Activated CD8-positive, alpha-beta T cell treated with anti-CD3 and anti-CD28 coated beads for 36 hours (primary cell): ENCODE measurements at regions of chr7 and their contacts with region 1.

Region 1: DNA sequence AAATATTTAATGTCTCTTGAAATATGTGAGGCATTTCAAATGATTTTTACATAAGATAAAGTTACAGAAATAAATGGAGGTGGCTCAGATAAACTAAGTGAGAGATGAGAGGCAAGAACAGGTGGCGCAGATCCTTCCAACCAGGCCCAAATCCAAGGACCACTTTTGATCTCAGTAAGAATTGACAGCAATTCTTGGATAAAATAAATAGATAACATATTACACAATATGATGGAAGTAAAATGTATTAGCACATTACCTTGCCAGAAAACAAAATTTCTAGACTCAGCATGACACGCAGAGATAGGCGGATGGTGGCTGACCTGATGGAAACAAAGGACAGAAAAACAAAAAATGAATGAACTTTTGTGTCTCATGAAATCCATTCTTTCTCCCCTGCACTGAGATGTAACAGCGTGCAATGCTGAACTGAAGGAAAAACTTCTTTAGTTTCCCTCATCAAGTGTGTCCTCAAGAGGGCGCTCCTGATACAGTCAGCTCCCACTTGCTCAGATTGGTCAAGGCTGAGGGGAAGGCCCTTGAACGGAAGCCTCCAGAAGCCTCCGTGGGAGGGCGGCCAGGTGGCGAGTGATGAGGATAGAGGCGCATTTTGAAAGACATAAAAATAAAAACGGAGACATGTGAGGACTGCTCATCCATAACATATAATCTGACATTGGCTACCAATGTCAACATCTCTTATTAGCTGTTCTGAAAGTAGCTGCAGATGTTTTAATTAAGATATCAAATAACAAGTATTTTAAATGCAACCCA is 62.8 kb upstream of the GSDME start:
- DNase-seq: peak; percentile 91
- ATAC-seq: peak; percentile 49
- H3K4me3 Mint-ChIP-seq: peak overlapping the region; percentile 50
- H3K27ac Mint-ChIP-seq: peak overlapping the region; percentile 97
- H3K4me1 Mint-ChIP-seq: peaks cover 36% of the 10 kb centered on the region
- H3K27me3 Mint-ChIP-seq: no peaks in the 10 kb centered on the region
- CTCF ChIP-seq: peak; percentile 90

Region 2: GRCh38 chr7:24510759-24511158 is 309.3 kb before region 1 on chr7:
- CTCF ChIA-PET with region 1: no interaction called
- POLR2A ChIA-PET with region 1: no interaction called
- intact Hi-C with region 1: no loop called
- DNase-seq: no peak
- ATAC-seq: no peak
- H3K4me3 Mint-ChIP-seq: no peak overlapping the region
- H3K27ac Mint-ChIP-seq: no peak overlapping the region
- H3K4me1 Mint-ChIP-seq: no peaks in the 10 kb centered on the region
- H3K27me3 Mint-ChIP-seq: peaks cover 2% of the 10 kb centered on the region
- CTCF ChIP-seq: no peak

Region 3: DNA sequence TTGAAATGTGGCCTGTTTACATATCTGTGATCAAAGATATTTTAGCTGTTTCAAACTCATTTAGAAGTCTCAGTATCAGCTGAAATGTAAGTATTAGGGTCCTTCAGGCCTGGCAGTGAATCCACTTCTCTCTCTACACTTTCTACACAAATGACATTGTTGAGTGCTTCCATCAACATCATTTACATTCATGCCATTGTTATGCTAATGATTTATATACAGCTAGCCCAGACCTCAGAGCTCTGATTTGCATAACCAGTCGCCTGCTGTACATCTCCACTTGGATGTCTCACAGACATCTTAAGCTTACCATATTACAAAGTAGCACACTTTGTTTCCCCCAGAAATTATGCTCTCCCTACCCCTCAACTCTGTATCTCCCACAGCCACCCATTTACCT is 134.4 kb before region 1 on chr7:
- CTCF ChIA-PET with region 1: no interaction called
- POLR2A ChIA-PET with region 1: no interaction called
- intact Hi-C with region 1: no loop called
- DNase-seq: no peak
- ATAC-seq: no peak
- H3K4me3 Mint-ChIP-seq: no peak overlapping the region
- H3K27ac Mint-ChIP-seq: no peak overlapping the region
- H3K4me1 Mint-ChIP-seq: no peaks in the 10 kb centered on the region
- H3K27me3 Mint-ChIP-seq: no peaks in the 10 kb centered on the region
- CTCF ChIP-seq: no peak

Region 4: DNA sequence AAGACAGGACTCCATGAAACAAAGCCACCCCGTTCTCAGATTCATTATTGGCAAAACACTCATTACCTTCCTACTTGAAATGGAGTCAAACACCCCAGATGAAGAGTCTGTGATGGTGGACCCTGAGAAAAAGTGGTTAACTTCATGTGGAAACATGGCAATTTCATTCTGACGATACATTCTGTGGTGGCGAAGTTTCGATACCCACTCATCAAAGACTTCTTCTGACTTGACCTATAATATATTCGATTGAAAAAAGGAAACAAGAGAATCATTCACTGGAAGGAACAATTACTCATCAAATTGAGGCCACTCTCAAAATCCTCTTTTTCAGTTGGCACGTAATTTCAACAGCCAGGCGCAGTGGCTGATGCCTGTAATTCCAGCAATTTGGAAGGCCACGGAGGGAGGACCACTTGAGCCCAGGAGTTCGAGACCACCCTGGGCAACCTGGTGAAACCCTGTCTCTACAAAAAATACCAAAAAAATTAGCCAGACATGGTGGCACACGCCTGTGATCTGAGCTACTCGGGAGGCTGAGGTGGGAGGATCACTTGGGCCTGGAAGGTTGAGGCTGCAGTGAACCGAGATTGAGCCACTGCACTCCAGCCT is 46.0 kb after region 1 on chr7:
- CTCF ChIA-PET with region 1: interaction called, 4 read pairs
- POLR2A ChIA-PET with region 1: no interaction called
- intact Hi-C with region 1: loop called (anchors 1 kb)
- DNase-seq: peak; percentile 76
- ATAC-seq: peak; percentile 90
- H3K4me3 Mint-ChIP-seq: peak overlapping the region; percentile 30
- H3K27ac Mint-ChIP-seq: peak overlapping the region; percentile 90
- H3K4me1 Mint-ChIP-seq: peaks cover 41% of the 10 kb centered on the region
- H3K27me3 Mint-ChIP-seq: no peaks in the 10 kb centered on the region
- CTCF ChIP-seq: no peak

Region 5: GRCh38 chr7:24896031-24896501 is 76.0 kb after region 1 on chr7:
- CTCF ChIA-PET with region 1: interaction called, 10 read pairs
- POLR2A ChIA-PET with region 1: no interaction called
- intact Hi-C with region 1: no loop called
- DNase-seq: peak; percentile 54
- ATAC-seq: peak; percentile 76
- H3K4me3 Mint-ChIP-seq: no peak overlapping the region
- H3K27ac Mint-ChIP-seq: no peak overlapping the region
- H3K4me1 Mint-ChIP-seq: peaks cover 61% of the 10 kb centered on the region
- H3K27me3 Mint-ChIP-seq: no peaks in the 10 kb centered on the region
- CTCF ChIP-seq: no peak

Region 6: DNA sequence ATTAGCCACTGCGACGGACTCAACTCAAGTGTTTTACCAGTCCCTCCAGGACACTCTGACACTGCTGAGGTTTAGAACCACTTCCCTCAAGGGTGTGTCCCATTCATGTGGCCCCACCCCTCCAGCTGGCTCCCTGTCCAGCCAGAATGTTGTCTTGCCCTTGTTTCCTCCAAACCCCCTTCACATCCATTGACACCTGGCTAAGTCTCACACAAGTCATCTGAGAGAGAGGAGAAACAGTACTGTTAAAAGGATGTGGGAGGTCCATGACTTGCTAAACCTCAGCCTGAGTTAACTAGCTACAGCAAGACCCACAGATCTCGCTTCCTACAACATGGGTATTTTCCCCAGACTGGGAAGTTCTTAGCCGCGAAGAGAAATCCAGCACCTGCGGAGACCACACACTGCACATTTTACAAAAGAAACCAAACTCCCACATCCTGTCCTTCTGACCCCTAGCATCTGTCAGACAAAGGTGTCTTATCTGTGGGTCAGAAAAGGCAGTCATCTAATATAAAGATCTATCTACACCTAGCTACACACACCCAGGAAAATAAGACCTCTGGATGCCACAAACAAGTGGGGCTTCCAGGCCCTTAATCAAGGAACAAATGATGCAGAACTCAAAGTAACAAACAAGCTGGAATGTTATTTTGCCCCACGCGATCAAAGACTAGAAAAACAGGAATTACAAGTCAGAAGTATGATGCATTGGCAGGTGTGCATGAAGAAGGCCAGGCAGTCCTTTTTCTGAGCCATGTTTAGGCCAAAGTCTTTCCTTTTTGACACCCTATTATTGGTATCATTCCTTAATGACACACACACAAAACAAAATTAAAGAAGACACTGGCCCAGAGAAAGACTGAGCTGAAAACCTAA is 146.0 kb after region 1 on chr7:
- CTCF ChIA-PET with region 1: interaction called, 10 read pairs
- POLR2A ChIA-PET with region 1: interaction called, 3 read pairs
- intact Hi-C with region 1: loop called (anchors 1 kb)
- DNase-seq: peak; percentile 68
- ATAC-seq: peak; percentile 87
- H3K4me3 Mint-ChIP-seq: peak overlapping the region; percentile 6
- H3K27ac Mint-ChIP-seq: peak overlapping the region; percentile 48
- H3K4me1 Mint-ChIP-seq: peaks cover 77% of the 10 kb centered on the region
- H3K27me3 Mint-ChIP-seq: no peaks in the 10 kb centered on the region
- CTCF ChIP-seq: no peak

Region 7: DNA sequence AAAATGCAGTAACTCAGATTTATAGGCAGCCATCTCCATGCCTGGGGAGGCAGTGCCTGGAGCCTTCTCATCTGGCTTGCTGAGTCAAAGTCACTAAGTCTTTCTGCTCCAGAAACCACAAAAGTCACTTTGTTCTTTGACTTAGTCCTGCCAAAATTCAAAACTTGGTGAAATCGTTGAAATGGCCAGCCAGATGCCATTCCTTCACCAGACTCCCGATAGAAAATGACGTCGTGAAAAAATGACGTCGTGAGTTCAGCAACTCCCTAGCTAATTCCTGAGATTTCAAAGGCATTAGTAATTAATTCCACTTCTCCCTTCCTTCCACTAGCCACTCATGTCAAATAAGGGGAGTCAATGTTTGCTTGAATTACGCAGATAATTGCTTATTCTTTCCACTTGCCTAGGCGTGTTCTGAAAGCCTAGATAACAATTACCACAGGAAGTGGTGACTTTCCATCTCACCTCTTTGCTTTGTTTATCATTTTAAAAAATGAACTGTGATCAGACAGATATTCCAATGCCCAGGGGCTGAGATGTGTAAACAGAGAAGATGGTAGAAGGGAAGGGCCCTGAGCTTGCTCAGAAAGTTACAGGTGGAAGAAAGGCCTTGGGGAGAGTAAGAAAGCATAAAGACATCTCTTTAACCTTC is 208.4 kb after region 1 on chr7:
- CTCF ChIA-PET with region 1: interaction called, 17 read pairs
- POLR2A ChIA-PET with region 1: no interaction called
- intact Hi-C with region 1: no loop called
- DNase-seq: peak; percentile 48
- ATAC-seq: peak; percentile 78
- H3K4me3 Mint-ChIP-seq: no peak overlapping the region
- H3K27ac Mint-ChIP-seq: peak overlapping the region; percentile 92
- H3K4me1 Mint-ChIP-seq: peaks cover 42% of the 10 kb centered on the region
- H3K27me3 Mint-ChIP-seq: no peaks in the 10 kb centered on the region
- CTCF ChIP-seq: no peak

Region 8: GRCh38 chr7:25093268-25093826 is 273.2 kb after region 1 on chr7:
- CTCF ChIA-PET with region 1: interaction called, 49 read pairs
- POLR2A ChIA-PET with region 1: interaction called, 5 read pairs
- intact Hi-C with region 1: loop called (anchors 2 kb)
- DNase-seq: peak; percentile 91
- ATAC-seq: peak; percentile 90
- H3K4me3 Mint-ChIP-seq: no peak overlapping the region
- H3K27ac Mint-ChIP-seq: no peak overlapping the region
- H3K4me1 Mint-ChIP-seq: peaks cover 13% of the 10 kb centered on the region
- H3K27me3 Mint-ChIP-seq: peaks cover 2% of the 10 kb centered on the region
- CTCF ChIP-seq: peak; percentile 83

Region 9: GRCh38 chr7:25109276-25109675 is 289.2 kb after region 1 on chr7:
- CTCF ChIA-PET with region 1: no interaction called
- POLR2A ChIA-PET with region 1: no interaction called
- intact Hi-C with region 1: no loop called
- DNase-seq: no peak
- ATAC-seq: no peak
- H3K4me3 Mint-ChIP-seq: no peak overlapping the region
- H3K27ac Mint-ChIP-seq: no peak overlapping the region
- H3K4me1 Mint-ChIP-seq: peaks cover 12% of the 10 kb centered on the region
- H3K27me3 Mint-ChIP-seq: no peaks in the 10 kb centered on the region
- CTCF ChIP-seq: no peak